ENCODE measurements at regions of chrX and their contacts with region 1.

Region 1: GRCh38 chrX:51395810-51396728 is 63.4 kb downstream of the NUDT10 start:
- DNase-seq: no peak
- H3K4me3 ChIP-seq: peak overlapping the region; percentile 50 to 61
- H3K27ac ChIP-seq: peak overlapping the region; percentile 35 to 53
- H3K4me1 ChIP-seq: no peaks in the 10 kb centered on the region
- H3K27me3 ChIP-seq: no peaks in the 10 kb centered on the region
- CTCF ChIP-seq: peak in 1 of 3 experiments; percentile 34

Region 2: DNA sequence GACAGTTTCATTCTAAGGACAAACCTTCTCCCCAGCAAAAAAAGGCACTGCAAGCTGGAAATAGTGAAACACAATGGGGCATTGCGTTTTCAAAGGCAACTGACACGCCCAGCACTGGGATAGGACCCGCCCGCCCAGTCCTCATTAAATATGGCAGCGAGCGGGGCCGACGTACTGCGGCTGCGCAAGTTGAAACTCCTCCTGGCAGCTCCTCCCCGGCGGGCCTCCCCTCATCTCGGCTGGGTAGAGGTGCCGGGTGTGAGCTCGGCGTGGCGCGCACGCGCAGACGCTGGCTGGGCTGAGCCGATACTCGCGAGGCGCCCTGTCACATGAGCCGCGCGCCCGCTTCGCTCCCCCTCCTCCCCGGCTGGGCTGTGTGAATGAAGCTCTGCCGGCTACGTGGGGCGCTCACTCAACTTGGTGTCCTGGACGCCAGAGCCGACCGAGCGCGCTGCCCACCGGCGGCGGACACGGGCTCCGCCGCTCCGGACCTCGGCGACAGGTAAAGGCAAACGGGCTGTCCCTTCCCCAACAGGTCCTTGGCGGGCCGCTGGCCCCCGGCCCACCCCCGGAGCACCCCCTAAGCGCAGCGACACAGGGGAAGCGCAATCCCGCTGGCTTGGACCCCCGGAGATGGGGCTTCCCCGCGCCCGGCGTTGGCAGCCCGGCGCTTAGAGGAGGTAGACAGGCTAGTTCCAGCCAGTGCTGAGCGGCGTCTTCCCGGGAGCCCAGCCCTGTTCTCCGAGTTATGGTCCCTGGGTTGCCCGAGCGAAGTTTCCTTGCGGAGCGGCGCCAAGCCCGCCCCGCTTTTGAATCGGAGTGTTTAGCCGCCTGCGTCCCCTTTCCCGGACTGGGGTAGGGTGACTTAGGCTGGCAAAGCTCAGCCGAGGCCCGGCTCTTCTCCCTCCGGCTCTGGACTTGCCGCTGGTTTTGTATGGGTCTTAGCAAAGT is 1473.5 kb before region 1 on chrX and contains the start of gene CLCN5:
- intact Hi-C with region 1: loop called (anchors 10 kb)
- DNase-seq: peak; percentile 86 to 98
- H3K4me3 ChIP-seq: peak within 1 kb of the TSS; percentile 59 to 89
- H3K27ac ChIP-seq: peak within 1 kb of the TSS; percentile 58 to 86
- H3K4me1 ChIP-seq: no peaks in the 10 kb centered on the region
- H3K27me3 ChIP-seq: no peaks in the 10 kb centered on the region
- CTCF ChIP-seq: no peak
- total RNA-seq, gene CLCN5: 2.0 TPM

Region 3: GRCh38 chrX:51336584-51336983 is 59.5 kb before region 1 on chrX:
- intact Hi-C with region 1: loop called (anchors 2 kb)
- DNase-seq: no peak
- H3K4me3 ChIP-seq: no peak overlapping the region
- H3K27ac ChIP-seq: no peak overlapping the region
- H3K4me1 ChIP-seq: no peaks in the 10 kb centered on the region
- H3K27me3 ChIP-seq: no peaks in the 10 kb centered on the region
- CTCF ChIP-seq: peak in 2 of 3 experiments; percentile 8 to 57

Region 4: GRCh38 chrX:51892921-51893745 is 497.1 kb after region 1 on chrX and contains the start of gene MAGED1:
- intact Hi-C with region 1: loop called (anchors 10 kb)
- DNase-seq: peak; percentile 83 to 95
- H3K4me3 ChIP-seq: peak within 1 kb of the TSS; percentile 56 to 73
- H3K27ac ChIP-seq: peak within 1 kb of the TSS; percentile 76 to 85
- H3K4me1 ChIP-seq: peaks cover 0 to 3% of the 10 kb centered on the region in 2 donors
- H3K27me3 ChIP-seq: no peaks in the 10 kb centered on the region
- CTCF ChIP-seq: no peak
- total RNA-seq, gene MAGED1: 74.5 TPM